Naive thymus-derived CD8-positive, alpha-beta T cell (primary cell): ENCODE measurements at regions of chr12 and their contacts with region 1.

Region 1: GRCh38 chr12:51217968-51218606 is at the start of gene POU6F1:
- DNase-seq: peak; percentile 57 to 85 (median 71)
- ATAC-seq: peak; percentile 77 to 83
- H3K4me3 Mint-ChIP-seq: peak within 1 kb of the TSS; percentile 90 to 97 (median 92)
- H3K27ac Mint-ChIP-seq: peak within 1 kb of the TSS; percentile 93 to 98 (median 97)
- H3K4me1 Mint-ChIP-seq: peaks cover 17 to 23% (median 21%) of the 10 kb centered on the region in 4 donors
- H3K27me3 Mint-ChIP-seq: no peaks in the 10 kb centered on the region
- polyA plus RNA-seq, gene POU6F1: 0.62 to 1.8 (median 1.7) TPM

Region 2: DNA sequence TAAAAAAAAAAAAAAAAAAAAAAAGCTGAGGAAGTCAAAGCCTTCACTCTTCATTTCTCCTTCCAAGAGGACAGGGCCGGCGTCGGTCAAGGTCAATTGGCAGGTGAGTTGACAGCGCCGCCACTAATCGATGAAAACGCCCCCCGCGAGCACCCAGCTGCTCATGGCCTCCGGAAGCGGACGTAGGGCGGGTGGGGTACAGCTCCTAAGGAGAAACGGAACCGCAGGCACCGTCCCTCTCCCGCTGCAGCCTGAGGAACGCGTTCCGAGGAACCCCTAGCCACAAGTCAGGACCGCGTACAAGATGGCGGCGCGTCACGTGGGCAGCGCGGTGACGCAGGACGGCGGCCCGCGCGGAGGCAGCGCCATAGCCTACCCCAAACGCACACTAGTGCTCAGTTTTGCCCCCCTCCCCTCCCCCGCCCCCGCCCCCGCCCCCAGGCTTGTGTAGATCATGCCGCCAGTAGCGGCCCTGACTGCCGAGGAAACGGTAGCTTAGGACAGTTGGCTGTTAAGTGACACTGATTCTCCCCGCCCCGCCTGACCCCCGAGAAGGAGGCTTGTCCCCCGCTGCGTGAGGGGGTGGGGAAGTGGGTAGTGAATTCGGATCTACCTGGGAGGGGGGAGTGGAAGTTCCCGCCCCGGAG is 454.3 kb before region 1 on chr12 and contains the start of gene ATF1:
- POLR2A ChIA-PET with region 1: interaction called, 11 read pairs
- DNase-seq: peak; percentile 81 to 93 (median 89)
- ATAC-seq: peak; percentile 78 to 80
- H3K4me3 Mint-ChIP-seq: peak within 1 kb of the TSS; percentile 92 to 97 (median 94)
- H3K27ac Mint-ChIP-seq: peak within 1 kb of the TSS; percentile 90 to 99 (median 98)
- H3K4me1 Mint-ChIP-seq: peaks cover 14 to 50% (median 42%) of the 10 kb centered on the region in 4 donors
- H3K27me3 Mint-ChIP-seq: peaks cover 0 to 2% (median 0%) of the 10 kb centered on the region in 5 donors
- polyA plus RNA-seq, gene ATF1: 23.5 to 36.3 (median 34.5) TPM

Region 3: GRCh38 chr12:51083126-51083833 is 134.8 kb before region 1 on chr12 and contains the start of gene CSRNP2:
- POLR2A ChIA-PET with region 1: interaction called, 16 read pairs
- DNase-seq: peak; percentile 92 to 97 (median 94)
- ATAC-seq: peak; percentile 99
- H3K4me3 Mint-ChIP-seq: peak within 1 kb of the TSS; percentile 91 to 99 (median 96)
- H3K27ac Mint-ChIP-seq: peak within 1 kb of the TSS; percentile 89 to 98 (median 95)
- H3K4me1 Mint-ChIP-seq: peaks cover 18 to 41% (median 37%) of the 10 kb centered on the region in 4 donors
- H3K27me3 Mint-ChIP-seq: no peaks in the 10 kb centered on the region
- polyA plus RNA-seq, gene CSRNP2: 2.7 to 3.6 (median 2.7) TPM

Region 4: DNA sequence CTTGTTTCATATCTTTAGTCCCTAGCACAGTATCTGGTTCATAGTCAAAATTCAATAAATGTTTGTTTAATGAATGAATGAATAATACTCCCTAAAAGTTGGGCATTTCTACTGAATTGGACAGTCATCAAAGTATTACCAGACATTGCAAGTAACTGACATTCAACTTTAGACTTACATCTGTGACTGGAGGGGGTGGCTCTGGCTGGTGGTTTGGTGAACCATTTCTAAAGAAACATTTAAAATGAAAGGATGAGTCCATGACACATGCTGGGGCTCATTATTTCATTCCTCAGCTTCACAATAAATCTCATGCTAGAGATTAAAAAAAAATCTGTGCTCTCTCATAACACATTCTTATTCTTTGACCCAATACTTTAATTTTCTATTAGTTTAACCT is 114.1 kb before region 1 on chr12:
- POLR2A ChIA-PET with region 1: no interaction called
- DNase-seq: no peak
- ATAC-seq: no peak
- H3K4me3 Mint-ChIP-seq: no peak overlapping the region
- H3K27ac Mint-ChIP-seq: peak overlapping the region in 2 of 10 donors; percentile 27 to 53
- H3K4me1 Mint-ChIP-seq: no peaks in the 10 kb centered on the region
- H3K27me3 Mint-ChIP-seq: no peaks in the 10 kb centered on the region

Region 5: GRCh38 chr12:51172515-51173431 is 45.3 kb before region 1 on chr12 and contains the start of gene TFCP2:
- POLR2A ChIA-PET with region 1: interaction called, 12 read pairs
- DNase-seq: peak; percentile 84 to 96 (median 92)
- ATAC-seq: peak; percentile 98
- H3K4me3 Mint-ChIP-seq: peak within 1 kb of the TSS in 8 of 10 donors; percentile 58 to 88 (median 82)
- H3K27ac Mint-ChIP-seq: peak within 1 kb of the TSS in 7 of 10 donors; percentile 75 to 94 (median 88)
- H3K4me1 Mint-ChIP-seq: peaks cover 6 to 18% (median 15%) of the 10 kb centered on the region in 4 donors
- H3K27me3 Mint-ChIP-seq: no peaks in the 10 kb centered on the region
- polyA plus RNA-seq, gene TFCP2: 8.0 to 16.7 (median 9.9) TPM

Region 6: DNA sequence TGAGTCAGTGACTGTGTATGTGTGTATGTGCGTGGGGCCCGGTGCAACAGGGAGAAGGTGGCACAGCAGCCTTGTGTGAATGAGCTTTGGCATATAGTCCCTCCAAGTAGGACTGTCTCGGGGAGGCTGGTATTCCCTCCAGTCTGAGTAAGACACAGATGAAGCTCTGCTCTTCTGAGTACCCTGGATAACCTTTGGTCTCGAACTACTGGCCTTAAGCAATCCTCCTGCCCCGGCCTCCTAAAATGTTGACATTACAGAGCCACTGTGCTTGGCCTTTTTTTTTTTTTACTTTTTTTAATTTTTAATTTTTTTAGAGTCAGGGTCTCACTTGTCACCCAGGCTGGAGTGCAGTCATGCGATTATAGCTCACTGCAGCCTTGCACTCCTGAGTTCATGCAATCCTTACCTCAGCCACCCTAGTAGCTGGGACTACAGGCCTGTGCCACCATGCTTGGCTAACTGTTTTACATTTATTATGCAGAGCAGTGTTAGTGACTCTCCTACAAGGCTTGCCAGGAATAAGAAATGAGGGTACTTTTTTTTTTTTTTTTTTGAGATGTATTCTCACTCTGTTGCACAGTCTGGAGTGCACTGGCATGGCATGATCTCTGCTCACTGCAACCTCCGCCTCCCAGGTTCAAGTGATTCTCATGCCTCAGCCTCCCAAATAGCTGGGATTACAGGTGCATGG is 11.2 kb after region 1 on chr12:
- POLR2A ChIA-PET with region 1: interaction called, 15 read pairs
- DNase-seq: no peak
- ATAC-seq: no peak
- H3K4me3 Mint-ChIP-seq: no peak overlapping the region
- H3K27ac Mint-ChIP-seq: no peak overlapping the region
- H3K4me1 Mint-ChIP-seq: peaks cover 0 to 2% (median 2%) of the 10 kb centered on the region in 4 donors
- H3K27me3 Mint-ChIP-seq: no peaks in the 10 kb centered on the region

Region 7: DNA sequence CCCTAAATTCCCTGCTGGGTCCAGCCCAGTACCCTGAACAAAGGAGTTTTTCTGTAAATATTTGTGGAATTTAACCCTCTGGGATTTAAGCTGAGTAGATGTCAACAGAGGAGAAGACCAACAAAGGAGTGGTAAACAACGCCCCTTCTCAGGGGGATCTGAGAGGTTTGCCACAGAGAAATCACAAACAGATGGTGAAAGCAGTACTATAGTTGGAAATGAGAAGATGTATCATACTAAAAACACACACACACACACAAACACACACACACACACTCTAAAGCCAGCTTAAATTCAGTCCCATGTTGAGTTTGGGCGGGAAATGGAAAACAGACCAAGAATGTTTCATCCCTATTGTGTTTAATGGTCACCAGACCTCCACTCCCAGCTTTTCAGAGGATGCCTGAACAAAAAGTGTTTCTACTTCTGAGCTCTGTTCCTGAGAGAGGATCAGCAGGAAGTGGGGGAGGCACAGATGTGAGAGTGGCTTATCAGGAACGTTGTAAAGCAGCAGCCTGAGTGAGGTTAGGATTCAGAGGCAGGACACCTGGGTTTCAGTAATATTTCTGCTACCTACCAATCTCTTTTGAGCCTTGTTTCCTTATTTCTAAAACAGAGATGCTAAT is 102.7 kb after region 1 on chr12:
- POLR2A ChIA-PET with region 1: interaction called, 13 read pairs
- DNase-seq: no peak
- ATAC-seq: no peak
- H3K4me3 Mint-ChIP-seq: peak overlapping the region; percentile 74 to 99 (median 97)
- H3K27ac Mint-ChIP-seq: peak overlapping the region; percentile 91 to 100 (median 97)
- H3K4me1 Mint-ChIP-seq: peaks cover 41 to 93% (median 84%) of the 10 kb centered on the region in 4 donors
- H3K27me3 Mint-ChIP-seq: no peaks in the 10 kb centered on the region

Region 8: DNA sequence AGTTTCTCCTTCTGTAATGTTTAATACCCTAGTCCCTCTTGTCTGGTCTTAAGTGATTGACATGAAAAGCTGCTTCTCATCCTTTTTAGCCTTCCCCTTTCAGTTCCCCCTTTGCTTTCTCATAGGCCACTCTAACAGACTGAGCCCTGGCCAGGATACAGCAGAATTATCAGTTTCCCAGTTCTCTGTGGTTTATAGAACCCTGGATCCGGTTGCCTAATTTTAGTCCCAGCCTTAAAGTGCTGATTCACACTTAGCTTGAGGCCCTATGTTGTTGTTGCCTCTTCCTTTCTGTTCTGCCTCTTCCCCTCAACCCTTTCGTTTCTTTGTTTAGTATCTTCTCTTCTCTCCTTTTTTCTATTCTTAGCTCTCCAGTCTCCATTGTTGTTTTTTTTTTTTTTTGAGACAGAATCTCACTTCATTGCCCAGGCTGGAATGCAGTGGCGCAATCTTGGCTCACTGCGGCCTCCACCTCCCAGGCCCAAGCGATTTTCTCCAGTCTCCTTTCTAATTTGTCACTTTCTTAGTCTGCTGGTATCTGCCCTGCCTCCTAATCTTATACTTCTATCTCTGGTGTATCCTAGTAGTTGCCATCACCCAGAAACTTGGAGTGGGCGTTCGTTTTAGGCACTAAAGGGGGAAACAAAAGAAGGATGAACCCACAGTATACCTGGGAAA is 108.8 kb after region 1 on chr12:
- POLR2A ChIA-PET with region 1: interaction called, 13 read pairs
- DNase-seq: peak in 1 of 10 donors; percentile 14
- ATAC-seq: no peak
- H3K4me3 Mint-ChIP-seq: peak overlapping the region; percentile 4 to 81 (median 64)
- H3K27ac Mint-ChIP-seq: peak overlapping the region; percentile 80 to 97 (median 92)
- H3K4me1 Mint-ChIP-seq: peaks cover 40 to 86% (median 84%) of the 10 kb centered on the region in 4 donors
- H3K27me3 Mint-ChIP-seq: no peaks in the 10 kb centered on the region